Heart left ventricle (tissue), 16 donors: ENCODE measurements at regions of chr9 and their contacts with region 1.

Region 1: GRCh38 chr9:68584189-68585033 is 43.7 kb upstream of the TMEM252 start:
- DNase-seq: peak; percentile 82 to 91 (median 86)
- ATAC-seq: peak; percentile 91 to 98 (median 96)
- H3K4me3 ChIP-seq: no peak overlapping the region
- H3K27ac ChIP-seq: peak overlapping the region in 1 of 12 donors; percentile 27
- H3K4me1 ChIP-seq: no peaks in the 10 kb centered on the region
- H3K27me3 ChIP-seq: no peaks in the 10 kb centered on the region
- CTCF ChIP-seq: peak in 11 of 12 donors; percentile 95 to 100 (median 98)
- POLR2A ChIP-seq: no peak

Region 2: DNA sequence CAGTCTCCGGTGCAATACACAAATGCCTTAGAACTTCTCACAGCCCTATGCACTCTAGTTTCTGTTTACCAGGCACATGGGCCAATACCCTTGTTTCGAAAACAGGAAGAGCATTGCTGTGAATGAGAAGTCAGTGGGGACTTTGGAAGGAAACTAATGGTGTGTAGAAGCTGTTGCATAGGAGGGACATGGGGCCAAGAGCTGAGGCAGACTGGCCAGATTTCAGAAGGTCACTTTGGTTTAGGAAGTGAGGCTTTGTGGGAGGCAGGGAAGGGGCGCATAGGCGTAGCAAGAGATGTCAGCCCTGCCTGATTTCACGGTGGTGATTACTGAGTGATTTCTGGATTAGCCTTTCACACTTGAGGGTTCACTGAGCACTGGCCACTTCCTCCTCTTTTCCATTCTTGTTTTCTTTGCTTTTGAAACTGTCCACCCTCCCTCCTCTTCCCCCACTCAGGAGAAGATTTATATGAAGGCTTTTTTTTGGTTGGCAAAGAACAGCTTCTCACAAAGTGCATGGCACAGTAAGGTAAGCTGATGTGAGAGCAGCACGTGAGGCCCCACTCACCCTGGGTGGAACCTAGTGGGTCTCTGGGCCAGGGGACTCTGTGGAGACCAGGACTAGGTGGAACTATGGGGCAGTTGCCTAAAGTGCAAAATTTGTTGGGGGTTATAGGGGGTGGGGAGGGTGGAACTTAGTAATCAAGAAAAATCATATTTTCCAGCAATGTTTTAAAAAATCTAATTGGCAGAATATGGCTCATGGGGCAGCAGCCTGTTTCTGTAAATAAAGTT is 37.6 kb before region 1 on chr9:
- intact Hi-C with region 1: no loop called
- DNase-seq: no peak
- ATAC-seq: peak; percentile 51 to 87 (median 67)
- H3K4me3 ChIP-seq: peak overlapping the region in 1 of 12 donors; percentile 23
- H3K27ac ChIP-seq: peak overlapping the region in 6 of 12 donors; percentile 7 to 91 (median 34)
- H3K4me1 ChIP-seq: peaks cover 0 to 43% (median 7%) of the 10 kb centered on the region in 12 donors
- H3K27me3 ChIP-seq: no peaks in the 10 kb centered on the region
- CTCF ChIP-seq: no peak
- POLR2A ChIP-seq: no peak

Region 3: GRCh38 chr9:68685770-68686169 is 101.4 kb after region 1 on chr9:
- intact Hi-C with region 1: loop called in 1 of 10 experiments (anchors 5 kb)
- DNase-seq: no peak
- ATAC-seq: no peak
- H3K4me3 ChIP-seq: no peak overlapping the region
- H3K27ac ChIP-seq: no peak overlapping the region
- H3K4me1 ChIP-seq: peaks cover 0 to 18% (median 4%) of the 10 kb centered on the region in 12 donors
- H3K27me3 ChIP-seq: peaks cover 0 to 5% (median 0%) of the 10 kb centered on the region in 9 donors
- CTCF ChIP-seq: peak in 7 of 12 donors; percentile 9 to 31 (median 20)
- POLR2A ChIP-seq: no peak

Region 4: GRCh38 chr9:68704814-68705530 is 120.6 kb after region 1 on chr9 and contains the start of gene PIP5K1B:
- intact Hi-C with region 1: loop called in 4 of 10 experiments (anchors 2 to 10 kb)
- DNase-seq: peak; percentile 76 to 87 (median 84)
- ATAC-seq: peak; percentile 57 to 92 (median 86)
- H3K4me3 ChIP-seq: peak within 1 kb of the TSS; percentile 44 to 94 (median 68)
- H3K27ac ChIP-seq: peak within 1 kb of the TSS; percentile 71 to 95 (median 88)
- H3K4me1 ChIP-seq: peaks cover 0 to 31% (median 12%) of the 10 kb centered on the region in 12 donors
- H3K27me3 ChIP-seq: peaks cover 0 to 24% (median 5%) of the 10 kb centered on the region in 9 donors
- CTCF ChIP-seq: peak in 4 of 12 donors; percentile 19 to 36 (median 24)
- POLR2A ChIP-seq: peak in 1 of 2 donors; percentile 59
- total RNA-seq, gene PIP5K1B: 28.0 to 68.0 (median 47.5) TPM

Region 5: GRCh38 chr9:68844631-68845612 is 260.5 kb after region 1 on chr9:
- intact Hi-C with region 1: loop called in 5 of 10 experiments (anchors 5 to 10 kb)
- DNase-seq: peak in 2 of 5 donors; percentile 33 to 48
- ATAC-seq: peak in 3 of 4 donors; percentile 40 to 62 (median 48)
- H3K4me3 ChIP-seq: peak overlapping the region in 2 of 12 donors; percentile 25 to 37
- H3K27ac ChIP-seq: peak overlapping the region in 1 of 12 donors; percentile 78
- H3K4me1 ChIP-seq: peaks cover 0 to 35% (median 12%) of the 10 kb centered on the region in 12 donors
- H3K27me3 ChIP-seq: no peaks in the 10 kb centered on the region
- CTCF ChIP-seq: peak; percentile 16 to 65 (median 48)
- POLR2A ChIP-seq: no peak

Region 6: DNA sequence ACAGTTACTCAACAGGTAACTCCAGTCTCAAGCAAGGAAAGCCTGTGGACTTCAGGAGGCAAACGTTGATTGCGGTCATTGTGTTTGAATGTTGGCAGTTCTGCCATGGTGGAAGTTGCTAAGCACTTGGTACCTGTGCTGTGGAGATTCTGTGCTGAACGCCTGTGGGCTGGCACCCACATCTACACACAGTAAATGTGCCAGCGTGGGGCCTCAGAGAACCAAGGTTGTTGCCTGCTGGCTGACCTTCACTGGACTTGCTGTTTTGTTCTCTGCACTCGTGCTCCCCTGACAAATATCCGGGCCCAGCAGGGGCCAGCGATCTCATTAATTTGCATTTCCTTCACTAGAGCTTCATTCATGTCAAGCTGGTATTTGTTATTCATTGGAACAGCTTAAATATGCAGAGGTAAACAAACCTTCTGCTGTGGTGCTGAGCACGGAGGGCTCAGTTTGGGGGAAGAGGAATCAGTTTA is 287.7 kb after region 1 on chr9:
- intact Hi-C with region 1: loop called in 1 of 10 experiments (anchors 10 kb)
- DNase-seq: peak; percentile 59 to 80 (median 69)
- ATAC-seq: peak; percentile 90 to 93 (median 92)
- H3K4me3 ChIP-seq: no peak overlapping the region
- H3K27ac ChIP-seq: peak overlapping the region; percentile 46 to 84 (median 73)
- H3K4me1 ChIP-seq: peaks cover 0 to 46% (median 11%) of the 10 kb centered on the region in 12 donors
- H3K27me3 ChIP-seq: no peaks in the 10 kb centered on the region
- CTCF ChIP-seq: no peak
- POLR2A ChIP-seq: no peak

Region 7: GRCh38 chr9:68999393-69000105 is 415.1 kb after region 1 on chr9:
- intact Hi-C with region 1: loop called (anchors 2 to 10 kb)
- DNase-seq: peak in 4 of 5 donors; percentile 52 to 72 (median 62)
- ATAC-seq: peak; percentile 82 to 93 (median 92)
- H3K4me3 ChIP-seq: no peak overlapping the region
- H3K27ac ChIP-seq: peak overlapping the region in 10 of 12 donors; percentile 9 to 69 (median 62)
- H3K4me1 ChIP-seq: peaks cover 0 to 41% (median 20%) of the 10 kb centered on the region in 12 donors
- H3K27me3 ChIP-seq: no peaks in the 10 kb centered on the region
- CTCF ChIP-seq: peak; percentile 72 to 87 (median 77)
- POLR2A ChIP-seq: no peak

Region 8: DNA sequence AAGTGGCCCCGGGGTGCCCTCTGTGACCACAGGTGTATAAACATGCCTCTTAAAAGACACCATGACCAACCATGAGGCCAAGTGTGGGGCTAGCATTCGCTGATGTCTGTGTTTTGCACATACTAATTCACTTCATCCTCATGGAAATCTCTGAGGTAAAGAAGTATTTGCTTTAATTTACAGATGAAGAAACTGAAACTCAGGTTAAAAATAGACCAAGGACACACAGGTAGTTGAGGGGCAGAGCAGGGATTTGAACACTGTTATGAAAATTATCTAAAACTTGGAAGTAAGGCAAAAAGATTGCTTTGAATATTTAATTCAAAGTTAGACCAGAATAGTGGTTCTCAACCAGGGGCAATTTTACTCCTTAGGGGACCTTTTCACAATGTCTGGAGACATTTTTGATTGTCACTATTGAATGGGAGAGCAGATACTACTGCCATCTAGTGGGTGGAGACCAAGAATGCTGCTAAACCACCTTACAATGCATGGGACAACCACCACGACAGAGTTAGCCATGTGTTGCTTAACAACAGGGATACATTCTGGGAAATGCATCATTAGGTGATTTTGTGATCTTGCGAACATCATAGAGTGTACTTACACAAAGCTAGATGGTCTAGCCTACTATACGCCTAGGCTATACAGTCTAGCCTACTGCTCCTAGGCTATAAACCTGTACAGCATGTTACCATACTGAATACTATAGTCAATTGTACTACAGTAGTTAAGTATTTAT is 443.1 kb after region 1 on chr9:
- intact Hi-C with region 1: loop called in 7 of 10 experiments (anchors 1 to 10 kb)
- DNase-seq: no peak
- ATAC-seq: peak in 3 of 4 donors; percentile 76 to 82 (median 82)
- H3K4me3 ChIP-seq: no peak overlapping the region
- H3K27ac ChIP-seq: no peak overlapping the region
- H3K4me1 ChIP-seq: peaks cover 0 to 20% (median 0%) of the 10 kb centered on the region in 12 donors
- H3K27me3 ChIP-seq: no peaks in the 10 kb centered on the region
- CTCF ChIP-seq: peak; percentile 68 to 87 (median 76)
- POLR2A ChIP-seq: no peak